Activated T-helper 1 cell treated with anti-CD3 and anti-CD28 coated beads, Interleukin-12 subunit alpha, Interleukin-12 subunit beta, Interleukin-2, Interleukin-4 antibody, amounts not matched to agents 30 ng/mL and 10 ng/mL and 1 ng/mL, durations not matched to agents 14 hours and 24 hours and 36 hours (primary cell): ENCODE measurements at regions of chr1 and their contacts with region 1.

Region 1: GRCh38 chr1:150925816-150926741 is at the start of gene SETDB1:
- DNase-seq: peak; percentile 90
- H3K4me3 Mint-ChIP-seq: peak within 1 kb of the TSS; percentile 97
- H3K27ac Mint-ChIP-seq: peak within 1 kb of the TSS; percentile 95
- H3K4me1 Mint-ChIP-seq: peaks cover 23% of the 10 kb centered on the region
- H3K27me3 Mint-ChIP-seq: no peaks in the 10 kb centered on the region
- total RNA-seq, gene SETDB1: 60.6 and 63.7 TPM in 2 replicates

Region 2: GRCh38 chr1:150464422-150464826 is 461.7 kb before region 1 on chr1:
- intact Hi-C with region 1: loop called (anchors 1 kb)
- DNase-seq: peak; percentile 50
- H3K4me3 Mint-ChIP-seq: no peak overlapping the region
- H3K27ac Mint-ChIP-seq: peak overlapping the region; percentile 63
- H3K4me1 Mint-ChIP-seq: peaks cover 5% of the 10 kb centered on the region
- H3K27me3 Mint-ChIP-seq: no peaks in the 10 kb centered on the region

Region 3: DNA sequence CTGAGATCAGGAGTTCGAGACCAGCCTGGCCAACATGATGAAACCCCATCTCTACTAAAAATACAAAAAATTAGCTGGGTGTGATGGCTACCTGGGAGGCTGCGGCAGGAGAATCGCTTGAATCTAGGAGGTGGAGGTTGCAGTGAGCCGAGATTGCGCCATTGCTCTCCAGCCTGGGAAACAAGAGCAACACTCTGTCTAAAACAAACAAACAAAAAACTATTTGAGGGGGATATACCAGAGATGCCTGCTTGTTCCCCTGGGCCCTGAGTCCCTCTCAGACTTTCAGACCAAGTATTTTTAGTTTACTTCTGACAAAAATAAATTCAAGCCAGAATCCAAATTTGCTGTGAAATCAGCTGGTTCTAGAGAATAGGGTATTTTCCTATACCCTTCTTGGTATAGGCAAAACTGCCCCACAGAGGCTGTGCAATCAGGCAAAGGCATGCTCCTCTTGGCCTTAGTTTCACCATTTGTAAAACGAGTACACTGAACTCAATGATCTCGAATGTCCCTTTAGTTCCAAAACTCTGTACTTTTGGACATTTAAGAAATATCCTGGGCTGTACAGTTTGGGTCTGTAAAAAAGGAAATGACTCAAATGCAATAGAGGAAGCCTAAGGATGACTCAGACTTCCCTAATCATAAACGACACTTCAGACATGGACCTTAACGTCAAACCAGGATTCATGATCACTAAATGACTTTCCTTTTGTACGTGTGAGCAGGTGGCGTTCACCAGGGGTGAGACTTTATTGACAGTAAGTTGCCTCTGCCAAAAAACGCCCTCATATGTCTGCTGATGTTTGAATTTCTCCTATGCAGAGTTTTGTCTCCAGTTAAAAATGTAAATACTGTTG is 312.8 kb before region 1 on chr1:
- intact Hi-C with region 1: loop called (anchors 1 kb)
- DNase-seq: peak; percentile 49
- H3K4me3 Mint-ChIP-seq: peak overlapping the region; percentile 53
- H3K27ac Mint-ChIP-seq: peak overlapping the region; percentile 98
- H3K4me1 Mint-ChIP-seq: peaks cover 62% of the 10 kb centered on the region
- H3K27me3 Mint-ChIP-seq: no peaks in the 10 kb centered on the region

Region 4: GRCh38 chr1:150708595-150708994 is 217.5 kb before region 1 on chr1:
- intact Hi-C with region 1: loop called (anchors 1 kb)
- DNase-seq: no peak
- H3K4me3 Mint-ChIP-seq: no peak overlapping the region
- H3K27ac Mint-ChIP-seq: no peak overlapping the region
- H3K4me1 Mint-ChIP-seq: peaks cover 5% of the 10 kb centered on the region
- H3K27me3 Mint-ChIP-seq: peaks cover 21% of the 10 kb centered on the region

Region 5: DNA sequence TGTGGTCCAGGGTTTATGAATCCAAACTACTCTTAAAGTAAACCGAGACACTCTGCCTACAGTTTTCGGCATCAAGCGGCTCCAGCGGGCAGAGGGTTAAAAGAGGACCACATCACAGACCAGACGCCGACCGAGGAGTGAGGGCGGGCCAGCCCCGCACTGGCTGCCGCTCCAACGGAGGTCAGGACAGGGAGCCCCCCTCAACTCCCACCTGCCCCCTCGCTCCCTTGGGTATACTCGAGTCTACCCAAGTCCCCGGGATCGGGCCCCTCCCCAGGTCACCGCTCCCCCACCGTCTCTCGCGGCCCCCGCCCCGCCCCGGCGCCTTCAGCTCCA is 50.0 kb before region 1 on chr1:
- intact Hi-C with region 1: loop called (anchors 1 kb)
- DNase-seq: no peak
- H3K4me3 Mint-ChIP-seq: peak overlapping the region; percentile 86
- H3K27ac Mint-ChIP-seq: peak overlapping the region; percentile 88
- H3K4me1 Mint-ChIP-seq: peaks cover 34% of the 10 kb centered on the region
- H3K27me3 Mint-ChIP-seq: no peaks in the 10 kb centered on the region

Region 6: GRCh38 chr1:151008190-151008860 is 82.2 kb after region 1 on chr1 and contains the start of gene PRUNE1:
- intact Hi-C with region 1: loop called (anchors 1 kb)
- DNase-seq: peak; percentile 94
- H3K4me3 Mint-ChIP-seq: peak within 1 kb of the TSS; percentile 100
- H3K27ac Mint-ChIP-seq: peak within 1 kb of the TSS; percentile 96
- H3K4me1 Mint-ChIP-seq: peaks cover 79% of the 10 kb centered on the region
- H3K27me3 Mint-ChIP-seq: no peaks in the 10 kb centered on the region
- total RNA-seq, gene PRUNE1: 15.0 and 15.4 TPM in 2 replicates

Region 7: GRCh38 chr1:151254217-151255213 is 328.4 kb after region 1 on chr1 and contains the start of gene PSMD4:
- intact Hi-C with region 1: loop called (anchors 1 kb)
- DNase-seq: peak; percentile 91
- H3K4me3 Mint-ChIP-seq: peak within 1 kb of the TSS; percentile 98
- H3K27ac Mint-ChIP-seq: peak within 1 kb of the TSS; percentile 88
- H3K4me1 Mint-ChIP-seq: peaks cover 17% of the 10 kb centered on the region
- H3K27me3 Mint-ChIP-seq: no peaks in the 10 kb centered on the region
- total RNA-seq, gene PSMD4: 276 and 285 TPM in 2 replicates